ENCODE measurements at regions of chr6 and their contacts with region 1.

Region 1: DNA sequence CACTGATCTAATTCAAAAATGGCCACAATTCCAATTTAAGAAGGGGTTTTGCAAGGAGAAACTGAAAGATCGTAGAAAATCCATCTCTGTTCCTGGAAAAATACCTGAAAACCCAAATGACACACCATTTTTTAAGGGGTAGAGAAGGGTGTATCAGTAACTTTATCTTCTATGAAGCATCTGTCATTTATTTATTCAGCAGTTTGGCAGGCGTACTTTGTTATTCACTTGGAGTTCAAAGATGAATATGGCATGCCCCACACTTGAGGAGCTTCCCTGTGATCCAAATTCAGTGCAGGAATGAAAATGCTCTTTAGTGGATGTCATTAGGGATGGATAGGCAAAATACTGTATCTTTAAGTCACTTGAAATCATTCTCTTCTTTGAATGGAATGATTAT is 7.2 kb downstream of the HINT3 start:
- DNase-seq: no peak
- ATAC-seq: no peak
- H3K4me3 ChIP-seq: no peak overlapping the region
- H3K4me3 Mint-ChIP-seq: no peak overlapping the region
- H3K27ac ChIP-seq: no peak overlapping the region
- H3K27ac Mint-ChIP-seq: no peak overlapping the region
- H3K4me1 ChIP-seq: peaks cover 0 to 1% of the 10 kb centered on the region in 2 experiments
- H3K4me1 Mint-ChIP-seq: peaks cover 35 to 48% (median 43%) of the 10 kb centered on the region in 3 donors
- H3K27me3 ChIP-seq: no peaks in the 10 kb centered on the region
- H3K27me3 Mint-ChIP-seq: no peaks in the 10 kb centered on the region

Region 2: GRCh38 chr6:126361832-126362412 is 398.1 kb after region 1 on chr6:
- CTCF ChIA-PET with region 1: no interaction called
- POLR2A ChIA-PET with region 1: interaction called in 1 of 2 experiments, 10 read pairs
- DNase-seq: no peak
- ATAC-seq: no peak
- H3K4me3 ChIP-seq: no peak overlapping the region
- H3K4me3 Mint-ChIP-seq: no peak overlapping the region
- H3K27ac ChIP-seq: no peak overlapping the region
- H3K27ac Mint-ChIP-seq: no peak overlapping the region
- H3K4me1 ChIP-seq: no peaks in the 10 kb centered on the region
- H3K4me1 Mint-ChIP-seq: no peaks in the 10 kb centered on the region
- H3K27me3 ChIP-seq: no peaks in the 10 kb centered on the region
- H3K27me3 Mint-ChIP-seq: no peaks in the 10 kb centered on the region